ENCODE measurements at regions of chr18 and their contacts with region 1.

Region 1: GRCh38 chr18:9708057-9708433 is at the start of gene RAB31:
- DNase-seq: peak; percentile 74
- H3K4me3 ChIP-seq: peak within 1 kb of the TSS; percentile 61 to 84 (median 76)
- H3K27ac ChIP-seq: peak within 1 kb of the TSS; percentile 87 to 94 (median 90)
- H3K4me1 ChIP-seq: peaks cover 0 to 41% (median 27%) of the 10 kb centered on the region in 4 donors
- H3K27me3 ChIP-seq: peaks cover 43% of the 10 kb centered on the region
- CTCF ChIP-seq: no peak
- EP300 ChIP-seq: no peak
- POLR2A ChIP-seq: peak; percentile 38
- total RNA-seq, gene RAB31: 13.1 to 18.4 (median 16.9) TPM

Region 2: DNA sequence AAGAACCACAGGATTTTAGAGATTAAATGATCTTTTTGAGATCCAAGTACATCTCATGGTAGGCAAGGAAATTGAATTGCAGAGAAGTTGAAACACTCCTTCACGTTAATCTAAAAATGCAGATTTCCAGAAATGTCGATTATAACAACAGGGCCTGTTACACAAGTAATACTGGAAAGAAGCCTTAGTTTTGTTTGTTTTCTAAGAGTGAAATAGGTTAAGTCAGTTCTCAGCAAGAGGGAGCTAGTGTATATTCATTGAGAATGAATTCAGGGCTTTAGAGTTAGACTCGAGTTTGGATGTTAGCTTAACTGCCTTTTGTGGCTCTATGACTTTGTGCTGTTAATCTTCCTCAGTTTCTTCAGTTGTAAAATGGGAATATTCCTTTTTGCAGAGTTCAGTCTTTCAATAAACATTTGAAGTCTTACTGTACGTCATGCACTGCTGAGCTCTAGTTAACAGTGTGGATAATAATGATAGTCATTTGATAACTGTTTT is 604.6 kb before region 1 on chr18:
- in situ Hi-C with region 1: no loop called
- intact Hi-C with region 1: no loop called
- DNase-seq: no peak
- H3K4me3 ChIP-seq: peak overlapping the region; percentile 17 to 84 (median 72)
- H3K27ac ChIP-seq: peak overlapping the region; percentile 88 to 99 (median 96)
- H3K4me1 ChIP-seq: peaks cover 37 to 57% (median 49%) of the 10 kb centered on the region in 4 donors
- H3K27me3 ChIP-seq: no peaks in the 10 kb centered on the region
- CTCF ChIP-seq: no peak
- EP300 ChIP-seq: no peak
- POLR2A ChIP-seq: no peak

Region 3: DNA sequence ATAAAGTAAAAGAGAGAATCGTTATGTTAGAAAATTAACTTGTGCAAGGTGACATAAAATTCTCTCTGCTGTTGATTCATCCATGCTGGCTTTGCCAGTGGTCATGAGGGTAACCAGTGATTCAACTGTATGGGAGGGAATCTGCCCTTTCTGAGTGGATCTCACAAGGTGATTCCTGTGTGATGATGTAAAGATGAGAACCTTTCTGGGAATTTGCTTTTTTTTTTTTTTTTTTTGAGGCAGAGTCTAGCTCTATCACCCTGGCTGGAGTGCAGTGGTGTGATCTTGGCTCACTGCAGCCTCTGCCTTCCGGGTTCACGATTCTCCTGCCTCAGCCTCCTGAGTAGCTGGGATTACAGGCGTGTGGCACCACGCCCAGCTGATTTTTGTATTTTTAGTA is 23.3 kb after region 1 on chr18:
- in situ Hi-C with region 1: no loop called
- intact Hi-C with region 1: no loop called
- DNase-seq: no peak
- H3K4me3 ChIP-seq: no peak overlapping the region
- H3K27ac ChIP-seq: no peak overlapping the region
- H3K4me1 ChIP-seq: peaks cover 0 to 3% (median 0%) of the 10 kb centered on the region in 4 donors
- H3K27me3 ChIP-seq: no peaks in the 10 kb centered on the region
- CTCF ChIP-seq: no peak
- EP300 ChIP-seq: no peak
- POLR2A ChIP-seq: no peak

Region 4: GRCh38 chr18:9808295-9809241 is 100.5 kb after region 1 on chr18:
- in situ Hi-C with region 1: no loop called
- intact Hi-C with region 1: loop called (anchors 10 kb)
- DNase-seq: no peak
- H3K4me3 ChIP-seq: no peak overlapping the region
- H3K27ac ChIP-seq: peak overlapping the region; percentile 50 to 78 (median 64)
- H3K4me1 ChIP-seq: peaks cover 3 to 36% (median 13%) of the 10 kb centered on the region in 4 donors
- H3K27me3 ChIP-seq: no peaks in the 10 kb centered on the region
- CTCF ChIP-seq: no peak
- EP300 ChIP-seq: peak; percentile 3
- POLR2A ChIP-seq: no peak

Region 5: GRCh38 chr18:9943311-9943710 is 235.3 kb after region 1 on chr18:
- in situ Hi-C with region 1: no loop called
- intact Hi-C with region 1: loop called (anchors 10 kb)
- DNase-seq: no peak
- H3K4me3 ChIP-seq: no peak overlapping the region
- H3K27ac ChIP-seq: no peak overlapping the region
- H3K4me1 ChIP-seq: no peaks in the 10 kb centered on the region
- H3K27me3 ChIP-seq: no peaks in the 10 kb centered on the region
- CTCF ChIP-seq: no peak
- EP300 ChIP-seq: no peak
- POLR2A ChIP-seq: no peak